Natural killer cell (primary cell): ENCODE measurements at regions of chr2 and their contacts with region 1.

Region 1: DNA sequence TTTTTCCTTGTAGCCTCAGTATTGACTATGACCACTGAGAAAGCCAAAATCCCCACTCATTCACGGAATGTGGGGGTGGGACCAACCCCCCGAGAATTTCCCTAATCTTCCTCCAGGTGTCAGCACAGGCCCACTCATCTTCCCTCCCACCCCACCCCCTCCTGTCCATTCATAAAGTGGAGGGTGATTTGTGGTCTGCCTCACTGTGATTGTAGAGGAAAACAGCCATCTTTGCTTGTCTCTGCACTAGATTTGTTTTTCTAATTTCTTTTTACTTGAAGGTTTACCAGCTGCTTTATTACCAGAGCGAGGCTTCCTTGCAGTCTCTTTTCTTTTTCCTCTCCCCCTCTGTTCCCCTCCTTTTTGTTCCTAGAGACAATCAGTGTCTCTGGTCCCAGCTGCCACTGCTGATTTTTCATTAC is 171.8 kb downstream of the ICOS start:
- DNase-seq: peak; percentile 22 to 84
- ATAC-seq: peak; percentile 63 to 75 (median 74)
- H3K4me3 ChIP-seq: no peak overlapping the region
- H3K4me3 Mint-ChIP-seq: peak overlapping the region; percentile 60
- H3K27ac ChIP-seq: no peak overlapping the region
- H3K27ac Mint-ChIP-seq: peak overlapping the region in 1 of 2 donors; percentile 85
- H3K4me1 ChIP-seq: peaks cover 30% of the 10 kb centered on the region
- H3K4me1 Mint-ChIP-seq: peaks cover 35 to 38% of the 10 kb centered on the region in 2 donors
- H3K27me3 ChIP-seq: peaks cover 15% of the 10 kb centered on the region
- H3K27me3 Mint-ChIP-seq: peaks cover 34 to 59% of the 10 kb centered on the region in 2 donors
- CTCF ChIP-seq: peak; percentile 76

Region 2: GRCh38 chr2:204145263-204145751 is 37.0 kb after region 1 on chr2:
- intact Hi-C with region 1: loop called (anchors 1 kb)
- DNase-seq: peak; percentile 61 to 86
- ATAC-seq: peak; percentile 91 to 99 (median 98)
- H3K4me3 ChIP-seq: peak overlapping the region; percentile 19
- H3K4me3 Mint-ChIP-seq: peak overlapping the region; percentile 86
- H3K27ac ChIP-seq: no peak overlapping the region
- H3K27ac Mint-ChIP-seq: peak overlapping the region in 1 of 2 donors; percentile 45
- H3K4me1 ChIP-seq: peaks cover 5% of the 10 kb centered on the region
- H3K4me1 Mint-ChIP-seq: peaks cover 11 to 12% of the 10 kb centered on the region in 2 donors
- H3K27me3 ChIP-seq: no peaks in the 10 kb centered on the region
- H3K27me3 Mint-ChIP-seq: peaks cover 23 to 46% of the 10 kb centered on the region in 2 donors
- CTCF ChIP-seq: peak; percentile 98

Region 3: DNA sequence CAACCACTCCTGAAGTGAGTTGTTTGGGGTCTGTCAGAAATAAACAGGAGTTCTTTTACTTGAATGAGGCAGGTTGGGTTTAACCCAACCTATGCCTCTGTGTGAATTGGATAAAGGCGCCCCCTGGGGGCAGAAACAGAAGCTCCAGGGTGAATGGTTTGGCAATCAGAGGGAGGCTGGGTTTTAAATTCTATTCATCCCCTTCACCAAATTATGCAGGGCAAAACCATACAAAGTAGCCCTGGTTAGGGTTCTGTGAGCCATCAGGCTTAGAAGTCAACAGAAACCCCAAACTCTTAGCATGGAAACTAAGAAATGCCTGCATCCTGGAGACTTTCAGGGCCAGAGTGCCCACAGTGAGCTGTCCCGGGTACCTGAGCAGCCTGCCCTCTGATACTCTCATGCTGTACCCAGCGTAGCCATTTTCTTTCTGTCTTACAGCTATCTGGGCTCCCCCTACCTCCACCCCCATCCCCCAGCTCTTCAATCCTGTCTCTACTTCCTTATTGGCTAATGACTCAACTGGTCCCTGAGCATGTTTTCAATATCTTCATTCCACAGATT is 69.7 kb after region 1 on chr2:
- intact Hi-C with region 1: loop called (anchors 1 kb)
- DNase-seq: peak; percentile 41 to 77
- ATAC-seq: peak; percentile 49 to 73 (median 55)
- H3K4me3 ChIP-seq: no peak overlapping the region
- H3K4me3 Mint-ChIP-seq: no peak overlapping the region
- H3K27ac ChIP-seq: no peak overlapping the region
- H3K27ac Mint-ChIP-seq: no peak overlapping the region
- H3K4me1 ChIP-seq: no peaks in the 10 kb centered on the region
- H3K4me1 Mint-ChIP-seq: no peaks in the 10 kb centered on the region
- H3K27me3 ChIP-seq: no peaks in the 10 kb centered on the region
- H3K27me3 Mint-ChIP-seq: peaks cover 8 to 51% of the 10 kb centered on the region in 2 donors
- CTCF ChIP-seq: peak; percentile 75

Region 4: DNA sequence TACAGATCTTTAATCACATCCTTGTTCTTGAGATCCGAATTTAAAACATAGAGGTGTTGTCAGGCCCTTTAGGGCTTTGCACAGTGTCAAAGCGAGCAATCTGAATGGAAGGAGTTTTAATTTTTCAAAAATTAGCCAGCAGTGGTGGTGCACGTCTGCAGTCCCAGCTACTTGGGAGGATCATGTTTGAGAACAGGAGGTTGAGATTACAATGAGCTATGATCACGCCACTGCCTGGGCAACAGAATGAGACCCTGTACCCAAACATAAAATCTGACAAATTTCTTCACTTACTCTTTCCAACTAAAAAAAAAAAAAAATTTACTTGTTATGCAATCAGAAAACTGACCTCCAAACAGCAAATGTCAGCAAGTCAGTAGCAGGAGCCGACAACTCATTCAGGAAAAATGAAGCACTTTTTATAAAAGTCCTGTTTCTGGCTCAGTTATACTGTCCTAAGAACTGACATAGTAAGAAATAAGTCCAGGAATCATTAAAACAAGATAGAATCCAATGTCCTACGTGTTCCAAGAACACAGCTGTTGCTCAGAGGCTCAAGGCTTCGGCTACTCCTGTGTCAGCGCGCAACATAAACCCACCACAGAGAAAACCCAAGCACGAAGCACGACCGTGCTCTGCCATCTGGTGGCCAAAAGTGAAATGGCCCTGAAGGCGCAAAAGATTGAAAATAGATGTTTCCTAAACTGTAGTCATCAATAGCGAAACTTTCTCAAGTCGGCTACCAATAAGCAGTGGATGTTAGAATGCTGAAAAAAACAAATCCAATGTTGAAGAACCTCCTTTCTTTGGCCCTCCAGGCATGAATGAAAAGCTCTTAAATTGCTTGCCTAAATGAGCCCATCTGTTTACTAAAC is 1839.5 kb after region 1 on chr2:
- intact Hi-C with region 1: loop called (anchors 2 kb)
- DNase-seq: peak; percentile 44 to 68
- ATAC-seq: peak; percentile 74 to 82 (median 79)
- H3K4me3 ChIP-seq: no peak overlapping the region
- H3K4me3 Mint-ChIP-seq: no peak overlapping the region
- H3K27ac ChIP-seq: no peak overlapping the region
- H3K27ac Mint-ChIP-seq: no peak overlapping the region
- H3K4me1 ChIP-seq: no peaks in the 10 kb centered on the region
- H3K4me1 Mint-ChIP-seq: peaks cover 10 to 12% of the 10 kb centered on the region in 2 donors
- H3K27me3 ChIP-seq: peaks cover 18% of the 10 kb centered on the region
- H3K27me3 Mint-ChIP-seq: peaks cover 27 to 52% of the 10 kb centered on the region in 2 donors
- CTCF ChIP-seq: peak; percentile 92